Stomach (tissue), 19 donors: ENCODE measurements at regions of chr9 and their contacts with region 1.

Region 1: DNA sequence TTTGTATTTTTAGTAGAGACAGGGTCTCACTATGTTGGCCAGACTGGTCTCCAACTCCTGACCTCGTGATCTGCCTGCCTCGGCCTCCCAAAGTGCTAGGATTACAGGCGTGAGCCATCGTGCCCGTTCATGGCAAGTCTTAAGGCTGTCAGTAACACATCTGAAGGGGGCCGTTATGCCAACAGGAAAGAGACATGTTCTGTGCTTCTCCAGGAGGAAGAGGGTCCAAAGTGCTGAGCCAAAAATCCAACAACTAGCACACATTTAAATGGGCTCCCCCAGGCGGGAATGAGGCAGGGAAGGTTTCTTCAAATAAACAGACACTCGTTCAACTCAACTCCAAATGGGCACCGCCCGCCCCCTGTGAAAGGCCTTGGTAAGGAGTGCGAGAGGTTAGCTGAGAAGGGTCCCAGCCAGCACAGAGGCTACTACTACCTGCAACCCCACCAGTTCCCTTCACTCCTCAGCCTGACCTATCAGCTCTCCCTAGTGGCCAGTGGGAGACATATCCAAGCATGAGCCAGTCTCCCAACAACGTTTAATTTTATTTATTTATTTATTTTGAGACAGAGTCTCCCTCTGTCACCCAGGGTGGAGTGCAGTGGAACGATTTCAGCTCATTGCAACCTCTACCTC is 84.1 kb upstream of the DMRT1 start:
- DNase-seq: peak in 1 of 2 donors; percentile 71
- H3K4me3 ChIP-seq: no peak overlapping the region
- H3K27ac ChIP-seq: no peak overlapping the region
- H3K4me1 ChIP-seq: peaks cover 0 to 28% (median 12%) of the 10 kb centered on the region in 4 donors
- H3K27me3 ChIP-seq: no peaks in the 10 kb centered on the region
- CTCF ChIP-seq: peak in 5 of 7 experiments; percentile 41 to 55 (median 51)
- EP300 ChIP-seq: no peak
- POLR2A ChIP-seq: no peak

Region 2: GRCh38 chr9:618478-618877 is 138.9 kb before region 1 on chr9:
- intact Hi-C with region 1: loop called (anchors 5 kb)
- DNase-seq: no peak
- H3K4me3 ChIP-seq: no peak overlapping the region
- H3K27ac ChIP-seq: peak overlapping the region in 1 of 5 donors; percentile 10
- H3K4me1 ChIP-seq: peaks cover 0 to 36% (median 12%) of the 10 kb centered on the region in 4 donors
- H3K27me3 ChIP-seq: no peaks in the 10 kb centered on the region
- CTCF ChIP-seq: no peak
- EP300 ChIP-seq: no peak
- POLR2A ChIP-seq: no peak

Region 3: GRCh38 chr9:655875-656274 is 101.5 kb before region 1 on chr9:
- intact Hi-C with region 1: no loop called
- DNase-seq: peak; percentile 30 to 88
- H3K4me3 ChIP-seq: no peak overlapping the region
- H3K27ac ChIP-seq: peak overlapping the region in 2 of 5 donors; percentile 6 to 34
- H3K4me1 ChIP-seq: peaks cover 7 to 29% (median 18%) of the 10 kb centered on the region in 4 donors
- H3K27me3 ChIP-seq: no peaks in the 10 kb centered on the region
- CTCF ChIP-seq: no peak
- EP300 ChIP-seq: no peak
- POLR2A ChIP-seq: no peak